Heart right ventricle (tissue), 16 donors: ENCODE measurements at regions of chr10 and their contacts with region 1.

Region 1: DNA sequence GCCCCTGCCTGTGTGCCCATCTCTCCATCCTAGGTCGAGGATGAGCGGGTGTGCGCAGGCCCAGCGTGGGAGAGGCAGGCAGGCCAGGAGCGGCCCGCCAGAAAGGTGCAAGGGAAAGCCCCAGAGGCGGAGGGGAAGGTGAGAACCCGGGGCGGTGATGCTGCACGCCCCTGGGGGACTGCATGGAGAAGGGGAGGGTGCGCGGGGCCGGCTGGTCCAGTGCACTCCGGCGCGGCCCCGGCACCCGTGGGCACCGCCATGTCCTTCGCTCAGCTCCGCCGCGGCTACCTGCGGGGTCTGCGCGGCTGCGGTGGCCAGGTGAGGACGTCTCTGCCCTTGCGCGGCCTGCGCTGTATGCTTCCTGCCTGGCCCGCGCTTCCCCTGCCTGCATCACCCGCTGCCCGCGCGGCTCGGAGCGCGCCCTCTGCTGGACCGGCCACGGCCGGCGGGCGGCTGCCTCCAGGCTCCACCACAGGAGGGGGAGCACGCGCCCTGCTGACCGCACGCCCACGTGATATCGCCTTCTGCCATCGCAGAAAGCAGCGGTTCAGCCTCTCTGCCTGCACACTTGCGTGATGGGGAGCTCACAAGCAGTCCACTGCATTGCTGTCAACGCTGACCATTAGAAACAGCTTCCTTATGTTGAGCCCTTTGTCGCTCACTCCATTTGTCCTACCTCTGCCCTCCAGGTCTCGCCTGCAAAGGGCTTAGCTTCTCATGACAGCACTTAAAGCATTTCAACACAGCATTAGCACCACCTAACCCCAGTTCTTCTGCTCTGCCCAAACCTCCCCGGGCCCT is 73.9 kb downstream of the CXCL12 start:
- DNase-seq: peak; percentile 87 to 91
- ATAC-seq: peak; percentile 95 to 99 (median 98)
- H3K4me3 ChIP-seq: peak overlapping the region in 9 of 10 donors; percentile 26 to 55 (median 48)
- H3K27ac ChIP-seq: peak overlapping the region in 5 of 10 donors; percentile 46 to 72 (median 65)
- H3K4me1 ChIP-seq: peaks cover 4 to 14% (median 10%) of the 10 kb centered on the region in 9 donors
- H3K27me3 ChIP-seq: no peaks in the 10 kb centered on the region
- CTCF ChIP-seq: peak; percentile 90 to 100 (median 98)

Region 2: DNA sequence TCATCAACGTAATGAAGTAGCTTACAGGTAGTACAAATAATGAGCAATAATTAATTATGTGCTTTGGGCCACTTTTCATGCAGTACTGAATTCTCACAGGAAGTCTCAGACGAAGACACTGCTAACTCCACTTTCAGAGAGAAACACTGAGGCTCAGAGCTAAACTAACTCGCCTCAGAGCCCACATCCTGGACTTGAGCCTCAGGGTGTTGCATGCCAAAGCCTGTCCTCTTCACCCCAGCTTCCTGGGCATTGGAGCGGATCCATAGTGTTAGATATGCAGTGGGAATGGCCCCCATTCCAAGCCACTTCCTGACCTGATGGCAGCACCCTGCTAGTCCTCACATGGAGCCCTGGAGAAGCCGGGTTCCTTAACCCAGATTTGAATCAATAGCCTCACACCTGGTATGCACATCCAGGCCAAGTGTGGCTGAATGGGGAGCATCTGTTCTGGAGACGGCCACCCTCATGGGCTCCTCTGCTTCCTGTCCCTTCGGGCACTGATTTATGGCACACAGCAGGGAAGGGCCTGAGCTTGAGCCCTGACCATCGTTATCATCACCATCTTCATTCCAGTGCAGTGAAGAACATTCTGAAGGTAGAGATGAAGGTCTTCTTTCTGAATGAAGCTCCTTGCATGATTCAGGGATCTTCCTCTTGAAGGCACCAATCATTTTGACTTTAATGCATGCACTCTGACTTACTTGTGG is 397.1 kb before region 1 on chr10:
- intact Hi-C with region 1: loop called in 1 of 10 experiments (anchors 5 kb)
- DNase-seq: no peak
- ATAC-seq: no peak
- H3K4me3 ChIP-seq: no peak overlapping the region
- H3K27ac ChIP-seq: peak overlapping the region in 1 of 10 donors; percentile 18
- H3K4me1 ChIP-seq: peaks cover 2 to 37% (median 23%) of the 10 kb centered on the region in 9 donors
- H3K27me3 ChIP-seq: no peaks in the 10 kb centered on the region
- CTCF ChIP-seq: no peak

Region 3: DNA sequence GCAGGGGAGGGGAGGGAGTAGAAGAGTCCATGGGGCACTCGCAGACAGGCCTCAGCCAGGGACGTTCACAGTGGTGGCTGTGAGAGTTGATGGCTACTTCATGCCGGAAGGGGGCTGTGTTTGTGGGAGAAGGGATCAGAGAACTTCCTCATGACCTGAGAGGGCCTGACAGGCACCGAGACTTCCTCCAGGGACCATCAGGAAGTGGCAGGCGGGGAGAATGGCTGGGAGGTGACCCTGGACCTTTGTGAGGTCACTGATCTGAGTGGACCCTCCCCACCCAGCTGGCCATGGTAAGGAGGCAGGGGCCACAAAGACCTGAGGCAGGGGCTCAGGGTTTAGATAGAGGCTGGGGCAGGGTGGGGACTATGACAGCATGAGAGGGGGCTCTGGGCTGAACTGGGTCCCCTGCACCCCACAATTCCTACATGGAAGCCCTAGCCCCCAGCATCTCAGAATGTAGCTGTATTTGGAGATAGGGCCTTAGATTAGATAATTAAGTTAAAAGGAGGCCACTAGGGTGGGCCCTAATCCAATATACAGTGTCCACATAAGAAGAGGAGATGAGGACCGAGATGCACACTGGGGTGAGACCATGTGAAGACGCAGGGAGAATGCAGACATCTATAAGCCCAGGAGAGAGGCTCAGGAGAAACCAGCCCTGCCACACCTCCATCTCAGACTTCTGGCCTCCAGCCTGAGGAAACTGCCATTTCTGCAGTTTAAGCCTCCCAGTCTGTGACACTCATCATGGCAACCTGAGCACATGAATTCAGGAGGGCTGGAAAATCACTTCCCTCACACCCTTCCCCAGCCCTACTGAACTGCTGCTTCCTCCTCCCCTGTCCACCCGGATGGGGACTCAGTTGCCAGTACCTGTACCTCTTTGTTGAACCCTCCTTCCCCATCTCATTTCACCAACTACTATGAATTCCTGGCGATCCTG is 388.4 kb before region 1 on chr10:
- intact Hi-C with region 1: loop called in 5 of 10 experiments (anchors 5 to 10 kb)
- DNase-seq: no peak
- ATAC-seq: peak in 7 of 8 donors; percentile 31 to 72 (median 47)
- H3K4me3 ChIP-seq: no peak overlapping the region
- H3K27ac ChIP-seq: no peak overlapping the region
- H3K4me1 ChIP-seq: peaks cover 0 to 13% (median 8%) of the 10 kb centered on the region in 9 donors
- H3K27me3 ChIP-seq: no peaks in the 10 kb centered on the region
- CTCF ChIP-seq: peak in 3 of 9 donors; percentile 13 to 39 (median 27)

Region 4: DNA sequence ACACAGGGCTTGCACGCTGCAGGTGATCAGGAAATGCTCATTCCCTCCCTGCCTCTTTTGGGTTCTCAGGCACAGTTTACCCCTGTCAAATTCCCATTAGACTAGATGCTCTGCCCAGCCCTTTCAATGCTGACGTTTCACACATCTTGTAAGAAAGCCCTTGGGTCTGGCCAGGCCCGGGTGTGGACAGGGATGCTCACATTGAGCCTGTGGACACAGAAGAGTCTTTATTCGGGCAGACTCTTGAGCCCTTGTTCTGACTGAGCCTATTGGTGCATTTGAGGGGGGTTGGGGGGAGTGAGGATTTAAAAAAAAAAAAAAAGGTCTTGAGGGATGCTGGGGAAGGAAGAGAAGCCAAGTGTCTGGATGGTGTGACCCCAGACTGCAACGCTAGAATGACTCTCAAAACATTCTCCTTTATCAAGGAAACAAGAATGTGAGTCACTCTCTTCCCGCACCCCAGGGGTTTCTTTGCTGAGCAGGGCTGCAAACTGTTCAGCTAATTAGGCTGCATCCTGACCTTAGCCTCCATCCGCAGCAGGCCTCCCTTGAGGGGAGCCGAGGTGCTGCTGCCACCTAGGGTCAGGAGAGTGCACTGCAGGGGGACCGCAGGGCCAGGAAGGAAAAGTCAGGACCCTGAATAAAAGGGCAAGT is 546.5 kb after region 1 on chr10:
- intact Hi-C with region 1: loop called in 5 of 10 experiments (anchors 5 to 10 kb)
- DNase-seq: peak; percentile 78 to 79
- ATAC-seq: peak; percentile 73 to 91 (median 86)
- H3K4me3 ChIP-seq: no peak overlapping the region
- H3K27ac ChIP-seq: peak overlapping the region in 1 of 10 donors; percentile 3
- H3K4me1 ChIP-seq: peaks cover 0 to 28% (median 0%) of the 10 kb centered on the region in 9 donors
- H3K27me3 ChIP-seq: peaks cover 0 to 8% (median 0%) of the 10 kb centered on the region in 7 donors
- CTCF ChIP-seq: peak; percentile 95 to 100 (median 98)

Region 5: GRCh38 chr10:44864637-44865288 is 553.8 kb after region 1 on chr10:
- intact Hi-C with region 1: loop called in 5 of 10 experiments (anchors 5 to 10 kb)
- DNase-seq: peak; percentile 91 to 95
- ATAC-seq: peak; percentile 92 to 98 (median 97)
- H3K4me3 ChIP-seq: peak overlapping the region; percentile 29 to 60 (median 54)
- H3K27ac ChIP-seq: peak overlapping the region; percentile 0 to 72 (median 63)
- H3K4me1 ChIP-seq: peaks cover 3 to 35% (median 16%) of the 10 kb centered on the region in 9 donors
- H3K27me3 ChIP-seq: peaks cover 0 to 30% (median 7%) of the 10 kb centered on the region in 7 donors
- CTCF ChIP-seq: peak; percentile 95 to 99 (median 98)